Activated naive CD8-positive, alpha-beta T cell treated with anti-CD3 and anti-CD28 coated beads, Interleukin-2, amount 10 ng/mL, durations not matched to agents 7 days and 5 days (primary cell): ENCODE measurements at regions of chr1 and their contacts with region 1.

Region 1: GRCh38 chr1:244652699-244653466 is at the start of gene DESI2:
- DNase-seq: peak; percentile 97
- ATAC-seq: peak; percentile 91
- H3K4me3 Mint-ChIP-seq: peak within 1 kb of the TSS; percentile 88
- H3K27ac Mint-ChIP-seq: peak within 1 kb of the TSS; percentile 84
- H3K4me1 Mint-ChIP-seq: peaks cover 18% of the 10 kb centered on the region
- H3K27me3 Mint-ChIP-seq: no peaks in the 10 kb centered on the region
- total RNA-seq, gene DESI2: 28.0 to 31.3 TPM

Region 2: GRCh38 chr1:244012202-244012601 is 640.7 kb before region 1 on chr1:
- POLR2A ChIA-PET with region 1: no interaction called
- DNase-seq: no peak
- ATAC-seq: no peak
- H3K4me3 Mint-ChIP-seq: no peak overlapping the region
- H3K27ac Mint-ChIP-seq: no peak overlapping the region
- H3K4me1 Mint-ChIP-seq: no peaks in the 10 kb centered on the region
- H3K27me3 Mint-ChIP-seq: peaks cover 4% of the 10 kb centered on the region

Region 3: DNA sequence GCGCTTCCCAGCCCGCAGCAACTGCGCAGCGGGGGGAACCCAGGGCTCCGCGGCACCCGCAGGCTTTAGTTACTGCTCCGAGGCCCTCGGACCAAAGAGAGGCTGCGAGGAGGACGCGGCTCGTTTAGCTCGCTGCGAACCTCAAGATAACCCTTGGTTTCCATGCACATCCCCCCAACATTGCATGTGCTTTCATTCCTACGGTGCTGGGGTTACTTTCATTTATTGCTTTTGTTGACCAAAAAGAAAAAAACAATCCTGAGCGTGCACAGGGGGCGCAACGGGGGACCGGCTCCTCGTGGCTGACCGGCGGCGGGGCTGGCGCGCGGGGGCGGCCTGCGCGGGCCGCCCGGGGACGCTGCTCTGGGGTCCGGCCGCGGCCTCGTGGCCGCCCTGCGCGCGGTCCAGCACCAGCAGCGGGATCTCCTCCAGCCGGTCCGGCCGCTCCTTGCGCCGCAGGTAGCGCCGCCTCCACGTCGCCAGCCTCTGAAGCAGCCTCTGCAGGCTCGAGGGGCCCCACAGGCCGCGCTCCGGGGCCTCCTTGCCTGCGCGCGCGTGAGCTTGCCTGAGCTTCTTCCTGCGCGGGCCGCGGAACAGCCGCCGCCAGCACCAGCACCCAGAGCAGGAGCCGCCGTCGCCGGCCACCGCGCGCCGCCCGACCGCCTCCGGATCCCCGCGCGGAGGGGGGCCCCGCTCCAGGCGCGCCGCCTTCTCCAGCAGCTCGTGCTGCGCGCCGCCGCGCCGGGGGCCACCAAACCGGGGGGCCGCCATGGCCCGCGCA is 77.5 kb after region 1 on chr1:
- POLR2A ChIA-PET with region 1: interaction called, 11 read pairs
- DNase-seq: peak; percentile 72
- ATAC-seq: peak; percentile 77
- H3K4me3 Mint-ChIP-seq: peak overlapping the region; percentile 94
- H3K27ac Mint-ChIP-seq: peak overlapping the region; percentile 85
- H3K4me1 Mint-ChIP-seq: peaks cover 20% of the 10 kb centered on the region
- H3K27me3 Mint-ChIP-seq: peaks cover 8% of the 10 kb centered on the region

Region 4: GRCh38 chr1:244768186-244768585 is 115.3 kb after region 1 on chr1:
- POLR2A ChIA-PET with region 1: no interaction called
- DNase-seq: no peak
- ATAC-seq: no peak
- H3K4me3 Mint-ChIP-seq: no peak overlapping the region
- H3K27ac Mint-ChIP-seq: no peak overlapping the region
- H3K4me1 Mint-ChIP-seq: no peaks in the 10 kb centered on the region
- H3K27me3 Mint-ChIP-seq: peaks cover 14% of the 10 kb centered on the region

Region 5: DNA sequence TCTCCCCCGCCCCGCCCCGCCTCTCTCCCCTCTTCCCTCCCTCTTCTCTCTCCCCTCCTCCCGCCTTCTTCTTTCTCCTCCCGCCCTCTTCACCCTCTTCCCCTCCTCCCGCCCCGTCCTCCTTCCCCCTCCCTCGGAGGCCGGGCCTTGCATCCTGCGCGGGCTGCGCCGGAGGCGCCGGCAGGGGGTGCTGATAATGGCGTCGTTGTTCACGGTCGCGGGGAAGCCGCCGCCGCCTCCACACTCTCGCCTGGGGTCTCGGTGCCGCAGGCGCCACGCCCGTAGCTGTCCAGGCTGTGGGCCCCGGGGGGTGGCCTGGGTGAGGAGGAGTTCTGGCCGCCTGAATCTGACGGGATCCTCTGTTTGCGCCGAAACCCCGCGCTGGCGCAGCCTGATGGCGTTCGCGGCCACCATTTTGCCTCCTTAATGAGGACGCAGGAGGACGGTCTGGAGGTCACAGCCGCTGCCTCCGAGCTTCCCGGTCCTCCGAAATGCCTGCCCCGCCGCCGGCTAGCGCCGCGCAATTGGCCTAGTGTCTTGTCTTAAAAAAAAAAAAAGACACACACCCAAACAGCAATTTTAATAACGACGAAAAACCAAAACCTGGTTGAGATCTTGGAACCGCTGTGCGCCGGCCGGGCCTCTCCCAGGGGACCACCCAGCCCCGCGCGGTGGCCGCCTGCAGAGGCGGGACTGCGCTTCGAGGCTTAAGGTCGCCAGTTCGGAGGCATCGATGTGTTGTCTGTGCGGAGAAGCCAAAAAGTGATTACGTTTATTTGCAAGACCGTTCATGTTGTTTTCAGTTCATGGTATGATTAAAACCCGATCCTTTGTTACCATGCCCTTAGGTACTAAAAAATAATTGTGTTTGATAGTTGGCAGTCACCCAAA is 318.0 kb after region 1 on chr1:
- POLR2A ChIA-PET with region 1: interaction called, 11 read pairs
- DNase-seq: peak; percentile 93
- ATAC-seq: peak; percentile 81
- H3K4me3 Mint-ChIP-seq: peak overlapping the region; percentile 89
- H3K27ac Mint-ChIP-seq: peak overlapping the region; percentile 98
- H3K4me1 Mint-ChIP-seq: peaks cover 19% of the 10 kb centered on the region
- H3K27me3 Mint-ChIP-seq: peaks cover 4% of the 10 kb centered on the region